Transverse colon (tissue), 4 donors: ENCODE measurements at regions of chr1 and their contacts with region 1.

Region 1: GRCh38 chr1:147630447-147630846 is 39.9 kb downstream of the ACP6 start:
- DNase-seq: no peak
- H3K4me3 ChIP-seq: no peak overlapping the region
- H3K27ac ChIP-seq: no peak overlapping the region
- H3K4me1 ChIP-seq: peaks cover 0 to 4% (median 3%) of the 10 kb centered on the region in 4 donors
- H3K27me3 ChIP-seq: no peaks in the 10 kb centered on the region
- CTCF ChIP-seq: no peak
- EP300 ChIP-seq: no peak
- POLR2A ChIP-seq: no peak

Region 2: DNA sequence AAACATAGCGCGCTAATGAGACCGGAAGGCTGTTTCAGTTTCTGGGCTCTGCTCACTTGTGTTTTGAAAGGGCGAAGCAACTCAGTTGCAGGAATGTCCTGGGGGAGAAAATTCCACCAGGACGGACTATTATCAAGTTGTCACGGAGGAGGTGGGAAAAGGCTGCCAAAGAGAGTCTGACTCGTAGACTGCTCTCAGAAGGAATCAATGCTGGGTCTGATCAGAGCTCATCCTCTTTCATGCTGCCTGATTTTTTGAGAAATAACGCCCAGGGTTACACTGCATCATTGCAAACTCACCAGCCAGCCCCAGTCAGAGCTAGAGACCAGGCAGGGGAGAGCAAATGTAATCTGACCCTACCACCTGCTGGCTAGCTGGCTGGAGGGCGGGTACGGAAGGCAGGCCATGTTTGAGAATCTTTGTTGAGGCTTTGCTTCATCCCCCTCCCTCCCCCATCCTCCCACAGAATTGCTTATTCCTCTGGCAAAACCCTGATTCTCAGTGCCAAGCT is 125.6 kb before region 1 on chr1:
- in situ Hi-C with region 1: loop called in 2 of 4 experiments (anchors 5 to 10 kb)
- intact Hi-C with region 1: no loop called
- DNase-seq: no peak
- H3K4me3 ChIP-seq: no peak overlapping the region
- H3K27ac ChIP-seq: no peak overlapping the region
- H3K4me1 ChIP-seq: peaks cover 0 to 2% (median 0%) of the 10 kb centered on the region in 4 donors
- H3K27me3 ChIP-seq: no peaks in the 10 kb centered on the region
- CTCF ChIP-seq: no peak
- EP300 ChIP-seq: no peak
- POLR2A ChIP-seq: no peak

Region 3: DNA sequence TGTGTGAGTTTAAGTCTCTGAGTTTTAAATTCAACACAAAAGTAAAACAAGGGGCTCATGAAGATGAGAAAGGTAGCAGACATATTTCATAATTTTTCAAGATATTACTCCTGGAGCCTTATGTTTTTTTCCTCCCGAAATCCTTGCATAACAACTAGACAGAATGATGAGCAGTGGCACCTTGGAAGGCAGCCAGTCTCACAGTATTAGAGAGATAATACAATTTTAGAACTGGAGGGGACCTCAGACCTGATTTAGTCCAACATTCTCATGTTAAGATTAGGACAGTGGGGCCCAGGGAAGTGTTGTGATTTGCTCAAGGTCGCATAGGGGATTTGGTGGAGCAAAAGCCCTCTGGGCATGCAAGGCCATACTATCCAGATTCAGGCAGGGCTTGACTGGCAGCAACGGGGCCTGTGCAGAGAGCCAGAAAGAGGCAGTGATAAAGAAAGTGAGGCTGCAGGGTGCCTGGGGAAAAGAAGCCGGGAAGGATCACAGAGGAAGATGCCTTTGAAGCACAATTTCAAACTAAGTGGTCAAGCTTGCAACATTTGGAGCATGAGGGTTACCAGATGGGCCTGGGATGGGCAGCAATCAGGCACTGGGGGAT is 120.6 kb before region 1 on chr1:
- in situ Hi-C with region 1: loop called in 2 of 4 experiments (anchors 5 to 10 kb)
- intact Hi-C with region 1: no loop called
- DNase-seq: no peak
- H3K4me3 ChIP-seq: no peak overlapping the region
- H3K27ac ChIP-seq: no peak overlapping the region
- H3K4me1 ChIP-seq: peaks cover 0 to 2% (median 0%) of the 10 kb centered on the region in 4 donors
- H3K27me3 ChIP-seq: no peaks in the 10 kb centered on the region
- CTCF ChIP-seq: no peak
- EP300 ChIP-seq: no peak
- POLR2A ChIP-seq: no peak

Region 4: DNA sequence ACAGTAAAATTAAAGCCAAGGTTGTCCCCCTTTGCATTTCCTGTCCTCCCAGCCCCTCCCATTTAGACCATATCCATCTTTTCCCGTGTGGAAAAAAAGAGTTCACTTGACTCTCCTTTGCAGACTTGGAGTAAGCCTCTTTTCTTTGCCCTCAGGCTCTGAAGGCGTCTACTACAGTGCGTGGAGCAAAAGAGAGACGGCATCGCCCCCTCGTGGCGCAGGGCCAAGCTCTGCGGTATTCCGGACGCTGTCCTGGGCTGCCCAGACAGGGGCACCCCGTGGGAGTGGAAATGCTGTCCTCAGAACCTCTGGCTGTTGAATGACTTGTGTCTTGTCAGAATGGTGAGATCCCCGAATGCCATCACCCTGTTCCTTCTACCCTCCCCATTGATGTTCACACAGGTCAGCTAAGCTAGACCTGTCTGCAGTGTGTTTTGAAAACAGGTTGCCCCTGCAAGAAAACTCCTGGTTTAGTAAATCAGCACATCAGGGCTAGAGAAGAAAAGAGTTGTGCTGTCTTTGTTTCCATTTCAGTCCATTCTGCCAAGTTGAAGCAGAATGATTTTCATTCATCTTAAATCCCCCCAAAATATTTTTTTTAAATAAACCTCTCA is 259.8 kb after region 1 on chr1:
- in situ Hi-C with region 1: loop called in 1 of 4 experiments (anchors 10 kb)
- intact Hi-C with region 1: no loop called
- DNase-seq: peak; percentile 62
- H3K4me3 ChIP-seq: no peak overlapping the region
- H3K27ac ChIP-seq: no peak overlapping the region
- H3K4me1 ChIP-seq: no peaks in the 10 kb centered on the region
- H3K27me3 ChIP-seq: peaks cover 4% of the 10 kb centered on the region
- CTCF ChIP-seq: peak; percentile 28 to 47 (median 45)
- EP300 ChIP-seq: no peak
- POLR2A ChIP-seq: no peak